OCI-LY7 (cell line): ENCODE measurements at regions of chr17 and their contacts with region 1.

Region 1: DNA sequence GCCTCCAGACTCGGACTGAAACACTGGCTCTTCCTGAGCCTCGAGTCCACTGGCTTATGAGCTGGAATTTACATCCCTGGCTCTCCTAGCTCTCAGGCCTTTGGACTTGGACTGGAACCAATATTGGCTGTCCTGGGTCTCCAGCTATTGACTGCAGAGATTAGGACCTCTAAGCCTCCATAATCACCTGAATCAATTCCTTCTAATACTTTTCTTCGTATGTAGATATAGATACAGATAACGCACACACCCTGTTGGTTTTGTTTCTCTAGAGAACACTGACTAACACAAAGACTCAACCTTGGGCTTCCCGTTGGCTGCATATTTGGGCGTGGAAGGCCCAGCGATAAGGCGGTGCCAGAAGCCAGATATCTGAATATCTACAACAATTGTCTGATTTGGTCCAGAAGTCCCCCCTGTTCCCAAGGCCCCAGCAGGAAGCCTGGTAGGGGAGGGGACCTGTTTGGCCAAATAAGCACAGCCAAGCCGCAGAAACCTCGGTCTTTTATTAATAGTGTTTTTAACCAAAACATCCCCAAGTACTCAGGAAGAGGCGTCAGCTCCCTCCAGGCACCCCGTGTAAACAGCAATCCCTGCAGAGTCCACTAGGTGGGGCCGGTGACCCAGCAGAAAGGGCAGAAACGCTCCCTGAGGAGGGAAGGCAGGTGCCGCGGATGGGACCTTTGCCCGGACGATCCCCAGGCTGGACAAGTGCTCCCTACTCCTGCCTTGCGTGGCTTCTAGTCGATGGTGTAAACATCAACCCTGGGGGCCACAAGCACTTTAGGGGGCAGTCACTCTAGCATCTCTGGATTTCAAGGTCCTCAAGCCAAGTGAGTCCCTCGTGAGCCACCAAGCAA is 57.0 kb downstream of the ABR start:
- DNase-seq: peak; percentile 75
- H3K4me3 ChIP-seq: peak overlapping the region; percentile 8
- H3K27ac ChIP-seq: peak overlapping the region; percentile 34
- H3K4me1 ChIP-seq: peaks cover 24% of the 10 kb centered on the region
- CTCF ChIP-seq: peak; percentile 93

Region 2: DNA sequence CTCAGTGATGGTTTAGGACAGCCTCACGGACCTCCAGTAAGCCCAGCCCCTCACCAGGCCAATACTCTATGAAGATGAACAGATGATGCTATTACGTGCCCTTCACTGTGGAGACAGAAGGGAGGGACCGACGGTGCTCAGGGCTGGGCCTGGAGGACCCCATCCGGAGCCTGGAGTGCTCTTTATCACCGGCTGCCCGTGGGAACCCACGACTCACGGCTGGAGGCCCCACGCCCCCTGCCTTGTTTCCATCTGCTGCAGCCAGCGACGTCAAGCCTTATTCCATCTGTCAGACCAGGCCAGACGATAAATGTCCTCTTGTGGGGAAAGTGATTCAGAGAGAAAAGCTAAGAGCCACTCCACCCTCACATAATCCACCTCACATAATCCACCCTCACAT is 129.8 kb before region 1 on chr17:
- CTCF ChIA-PET with region 1: no interaction called
- POLR2A ChIA-PET with region 1: no interaction called
- intact Hi-C with region 1: no loop called
- DNase-seq: no peak
- H3K4me3 ChIP-seq: no peak overlapping the region
- H3K27ac ChIP-seq: no peak overlapping the region
- H3K4me1 ChIP-seq: peaks cover under 1% of the 10 kb centered on the region
- CTCF ChIP-seq: no peak

Region 3: GRCh38 chr17:1179818-1180742 is 57.3 kb after region 1 on chr17 and contains the start of gene ABR:
- CTCF ChIA-PET with region 1: interaction called, 3 read pairs
- POLR2A ChIA-PET with region 1: interaction called, 3 read pairs
- intact Hi-C with region 1: loop called (anchors 1 kb)
- DNase-seq: peak; percentile 62
- H3K4me3 ChIP-seq: peak within 1 kb of the TSS; percentile 74
- H3K27ac ChIP-seq: peak within 1 kb of the TSS; percentile 90
- H3K4me1 ChIP-seq: peaks cover 55% of the 10 kb centered on the region
- CTCF ChIP-seq: no peak
- total RNA-seq, gene ABR: 153 and 164 TPM in 2 replicates

Region 4: GRCh38 chr17:1197781-1198490 is 75.2 kb after region 1 on chr17:
- CTCF ChIA-PET with region 1: interaction called, 3 read pairs
- POLR2A ChIA-PET with region 1: interaction called, 5 read pairs
- intact Hi-C with region 1: loop called (anchors 1 kb)
- DNase-seq: peak; percentile 96
- H3K4me3 ChIP-seq: peak overlapping the region; percentile 51
- H3K27ac ChIP-seq: peak overlapping the region; percentile 98
- H3K4me1 ChIP-seq: peaks cover 84% of the 10 kb centered on the region
- CTCF ChIP-seq: no peak

Region 5: GRCh38 chr17:1222321-1222720 is 99.6 kb after region 1 on chr17:
- CTCF ChIA-PET with region 1: no interaction called
- POLR2A ChIA-PET with region 1: no interaction called
- intact Hi-C with region 1: no loop called
- DNase-seq: no peak
- H3K4me3 ChIP-seq: no peak overlapping the region
- H3K27ac ChIP-seq: no peak overlapping the region
- H3K4me1 ChIP-seq: peaks cover 80% of the 10 kb centered on the region
- CTCF ChIP-seq: no peak

Region 6: DNA sequence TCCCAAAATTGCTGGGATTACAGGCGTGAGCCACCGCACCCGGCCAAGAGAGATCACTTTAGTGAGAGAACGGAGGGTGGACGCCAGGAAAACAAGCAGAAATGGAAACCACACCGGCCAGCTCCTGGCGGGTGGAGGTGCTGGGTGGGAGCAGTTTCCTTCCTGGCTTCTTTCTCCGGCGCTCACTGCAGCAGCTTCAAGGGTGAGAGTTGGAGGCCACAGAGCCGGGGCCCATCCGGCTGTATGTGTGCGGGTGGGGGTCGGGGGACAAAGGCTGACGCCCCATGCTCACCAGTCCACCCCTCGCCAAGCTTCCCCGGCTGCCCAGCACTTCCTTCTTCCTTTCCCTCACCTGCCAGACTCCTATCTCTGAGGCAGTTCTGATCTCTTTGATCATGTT is 133.9 kb after region 1 on chr17:
- CTCF ChIA-PET with region 1: no interaction called
- POLR2A ChIA-PET with region 1: no interaction called
- intact Hi-C with region 1: loop called (anchors 5 kb)
- DNase-seq: no peak
- H3K4me3 ChIP-seq: no peak overlapping the region
- H3K27ac ChIP-seq: no peak overlapping the region
- H3K4me1 ChIP-seq: no peaks in the 10 kb centered on the region
- CTCF ChIP-seq: no peak